ENCODE measurements at regions of chr7 and their contacts with region 1.

Region 1: DNA sequence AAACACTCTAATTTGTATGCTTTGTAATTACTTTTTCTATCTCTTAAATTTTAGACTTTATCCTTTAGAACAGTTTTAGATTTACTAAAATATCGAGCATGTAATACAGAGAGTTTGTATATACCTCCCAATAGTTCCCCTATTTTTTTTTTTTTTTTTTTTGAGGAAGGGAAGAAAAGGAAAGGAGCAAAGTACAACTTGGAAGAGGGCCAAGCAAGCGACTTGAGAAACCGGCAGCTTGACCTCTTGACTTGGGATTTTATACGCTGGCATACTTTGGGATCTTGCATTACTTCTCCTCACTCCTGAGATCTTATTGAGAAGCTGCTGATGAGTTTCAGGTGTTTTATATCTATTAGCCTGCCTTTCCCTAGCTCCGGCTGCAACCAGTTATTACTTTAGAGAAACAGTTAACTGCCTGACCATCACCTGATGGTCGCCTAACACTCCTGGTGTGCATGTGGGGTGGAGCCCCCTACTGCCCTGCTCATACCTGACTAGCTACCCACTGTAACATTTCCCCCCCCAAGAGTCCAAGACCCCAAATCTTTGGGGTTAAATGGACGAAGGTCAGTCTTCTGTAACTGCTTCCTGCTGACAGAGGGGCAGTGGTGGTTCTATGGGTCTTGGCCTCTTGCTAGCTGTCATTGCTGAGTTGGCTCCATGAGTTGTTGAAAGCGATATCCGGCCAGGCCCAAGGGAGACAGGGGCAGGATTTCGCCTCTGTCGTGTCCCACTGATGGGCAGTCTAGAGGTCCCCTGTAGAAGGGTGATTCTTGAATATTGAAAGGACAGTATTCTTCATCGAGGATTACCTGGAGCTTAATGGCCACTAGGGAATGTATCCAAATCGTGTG is 28.5 kb downstream of the MKLN1 start:
- DNase-seq: no peak
- ATAC-seq: no peak
- H3K4me3 ChIP-seq: no peak overlapping the region
- H3K4me3 Mint-ChIP-seq: peak overlapping the region; percentile 10
- H3K27ac ChIP-seq: no peak overlapping the region
- H3K27ac Mint-ChIP-seq: no peak overlapping the region
- H3K4me1 ChIP-seq: peaks cover 12% of the 10 kb centered on the region
- H3K4me1 Mint-ChIP-seq: peaks cover 84% of the 10 kb centered on the region
- H3K27me3 ChIP-seq: no peaks in the 10 kb centered on the region
- H3K27me3 Mint-ChIP-seq: no peaks in the 10 kb centered on the region
- CTCF ChIP-seq: no peak

Region 2: GRCh38 chr7:131302876-131303707 is 53.1 kb before region 1 on chr7:
- CTCF ChIA-PET with region 1: no interaction called
- POLR2A ChIA-PET with region 1: no interaction called
- intact Hi-C with region 1: no loop called
- DNase-seq: peak in 13 of 14 experiments; percentile 12 to 64 (median 24)
- ATAC-seq: peak; percentile 65
- H3K4me3 ChIP-seq: no peak overlapping the region
- H3K4me3 Mint-ChIP-seq: no peak overlapping the region
- H3K27ac ChIP-seq: no peak overlapping the region
- H3K27ac Mint-ChIP-seq: no peak overlapping the region
- H3K4me1 ChIP-seq: no peaks in the 10 kb centered on the region
- H3K4me1 Mint-ChIP-seq: no peaks in the 10 kb centered on the region
- H3K27me3 ChIP-seq: no peaks in the 10 kb centered on the region
- H3K27me3 Mint-ChIP-seq: no peaks in the 10 kb centered on the region
- CTCF ChIP-seq: peak; percentile 70

Region 3: DNA sequence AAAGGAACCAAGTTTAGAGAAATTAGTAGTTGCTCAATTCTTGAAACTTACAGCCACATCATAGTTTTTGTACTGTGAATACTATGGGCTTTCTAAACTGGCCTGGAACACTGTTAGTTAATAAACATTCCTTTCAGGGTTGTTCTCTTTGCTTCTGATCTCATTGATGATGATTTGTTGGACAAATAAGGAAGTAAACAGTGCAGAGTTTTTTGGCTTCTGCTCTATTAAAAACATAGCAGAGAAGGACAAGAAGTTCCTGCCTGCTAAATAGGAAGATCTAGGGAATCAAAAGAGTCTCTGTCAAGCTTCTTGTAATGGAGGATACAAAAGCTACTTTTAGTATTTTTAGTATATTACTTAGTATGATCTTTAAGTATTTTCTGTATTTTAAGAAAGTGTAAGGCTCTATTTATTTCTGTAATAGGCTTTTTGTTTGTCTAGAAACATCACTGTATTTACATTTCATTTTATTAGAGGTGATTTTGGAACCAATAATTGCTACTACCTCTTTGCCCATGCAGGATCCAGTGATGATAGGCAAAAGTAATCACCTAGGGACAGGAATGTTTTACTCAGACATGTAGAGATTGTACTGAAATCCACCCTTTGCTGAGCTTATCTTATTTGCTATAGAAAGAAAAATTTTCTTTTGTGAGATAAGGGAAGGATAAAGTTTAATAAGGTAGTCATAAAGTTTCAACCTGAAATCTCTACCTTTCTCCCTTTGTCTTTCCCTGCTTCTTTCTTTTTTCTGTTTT is 44.9 kb after region 1 on chr7:
- CTCF ChIA-PET with region 1: no interaction called
- POLR2A ChIA-PET with region 1: no interaction called
- intact Hi-C with region 1: loop called in 1 of 2 experiments (anchors 5 kb)
- DNase-seq: no peak
- ATAC-seq: no peak
- H3K4me3 ChIP-seq: no peak overlapping the region
- H3K4me3 Mint-ChIP-seq: no peak overlapping the region
- H3K27ac ChIP-seq: no peak overlapping the region
- H3K27ac Mint-ChIP-seq: no peak overlapping the region
- H3K4me1 ChIP-seq: no peaks in the 10 kb centered on the region
- H3K4me1 Mint-ChIP-seq: peaks cover 26% of the 10 kb centered on the region
- H3K27me3 ChIP-seq: no peaks in the 10 kb centered on the region
- H3K27me3 Mint-ChIP-seq: no peaks in the 10 kb centered on the region
- CTCF ChIP-seq: no peak

Measured in CD4-positive, alpha-beta T cell (primary cell).